RWPE1 (cell line): ENCODE measurements at regions of chr5 and their contacts with region 1.

Region 1: DNA sequence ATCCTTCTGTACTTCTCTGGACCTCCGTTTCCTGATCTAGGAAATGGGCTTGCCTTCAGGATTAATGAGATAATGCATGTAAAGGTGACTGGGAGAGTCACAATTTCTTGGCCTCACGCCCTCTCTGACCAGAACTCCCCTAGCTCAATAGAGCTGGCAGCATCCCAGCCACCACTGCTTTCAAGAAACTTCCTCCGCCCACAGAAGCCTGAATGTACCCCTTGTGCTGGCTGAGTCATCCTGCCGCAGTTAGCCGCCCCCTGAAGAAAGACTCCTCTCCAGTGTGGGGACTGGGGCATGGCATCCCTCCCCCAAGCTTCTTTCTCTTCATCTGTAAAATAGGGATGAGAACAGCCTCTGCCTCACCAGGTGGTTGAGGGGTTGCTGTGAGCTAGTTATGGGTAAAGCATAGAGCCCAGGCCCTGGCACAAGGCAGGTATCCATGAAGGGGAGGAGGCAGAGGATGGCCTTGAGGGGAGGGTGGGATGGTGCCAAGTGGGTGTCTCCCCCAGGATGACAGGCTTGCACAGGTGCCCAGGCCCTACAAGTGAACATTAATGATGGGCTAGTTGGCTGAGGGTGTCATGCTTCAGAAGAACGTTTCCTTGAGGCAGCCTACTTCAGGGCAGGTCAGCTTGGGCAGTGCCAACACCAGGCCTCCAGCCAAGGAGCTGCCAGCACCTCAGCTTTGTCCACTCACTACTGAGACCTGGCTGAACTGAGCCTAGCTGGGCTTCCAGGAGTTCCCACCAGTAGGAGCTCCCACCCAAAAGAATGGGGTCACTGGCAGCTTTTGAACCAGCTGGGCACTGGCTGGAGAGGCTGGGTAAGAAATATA is 3.4 kb downstream of the PDLIM4 start:
- DNase-seq: peak; percentile 53
- H3K27ac ChIP-seq: peak overlapping the region; percentile 98
- CTCF ChIP-seq: no peak

Region 2: GRCh38 chr5:132064738-132065331 is 196.1 kb before region 1 on chr5:
- CTCF ChIA-PET with region 1: no interaction called
- POLR2A ChIA-PET with region 1: no interaction called
- DNase-seq: peak; percentile 81
- H3K27ac ChIP-seq: peak overlapping the region; percentile 43
- CTCF ChIP-seq: peak; percentile 94

Region 3: DNA sequence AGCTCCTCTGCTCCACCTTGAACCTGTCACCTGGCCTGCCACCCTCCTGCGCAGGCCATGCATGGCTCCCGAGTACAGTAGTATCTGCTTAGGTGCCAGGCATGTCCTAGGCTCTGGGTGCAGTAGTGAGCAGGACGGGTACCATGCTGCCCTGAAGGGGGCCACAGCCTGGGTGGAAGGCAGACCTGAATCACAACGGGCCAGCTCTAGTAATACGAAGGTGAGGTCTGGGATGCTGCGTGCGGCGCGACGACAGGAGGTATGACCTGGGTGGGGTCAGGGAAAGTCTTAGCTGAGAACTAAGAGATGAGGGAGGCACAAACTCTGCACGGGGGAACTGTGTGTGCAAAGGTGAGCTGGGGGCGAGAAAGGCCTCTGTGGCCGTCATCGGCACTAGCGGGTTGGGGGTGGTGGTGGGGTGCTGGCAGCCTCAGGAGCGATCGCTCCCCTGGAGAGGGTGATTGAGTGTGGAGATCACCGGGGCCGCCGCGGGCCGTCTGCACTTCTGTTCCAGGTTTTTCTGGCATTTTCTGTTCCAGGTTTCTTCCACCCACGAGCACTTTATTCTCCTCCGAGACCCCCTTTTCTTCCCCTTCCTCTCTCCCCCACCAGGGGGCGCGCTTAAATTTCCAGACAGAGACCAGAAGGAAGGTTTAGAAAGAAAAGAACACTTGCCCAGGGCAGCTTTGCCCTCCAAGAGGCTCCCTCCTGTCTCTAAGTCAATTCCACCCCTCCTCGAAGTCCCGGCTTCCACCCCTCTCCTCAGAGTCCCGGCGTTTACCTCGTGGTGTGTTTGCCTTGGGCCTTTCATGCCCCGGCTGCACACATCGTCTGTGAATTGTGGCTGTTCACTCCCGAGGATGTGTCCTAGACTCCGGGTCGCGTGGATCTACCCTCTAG is 11.6 kb after region 1 on chr5:
- CTCF ChIA-PET with region 1: interaction called, 16 read pairs
- POLR2A ChIA-PET with region 1: interaction called, 3 read pairs
- DNase-seq: peak; percentile 60
- H3K27ac ChIP-seq: peak overlapping the region; percentile 98
- CTCF ChIP-seq: peak; percentile 93